ENCODE measurements at regions of chr3 and their contacts with region 1.

Region 1: DNA sequence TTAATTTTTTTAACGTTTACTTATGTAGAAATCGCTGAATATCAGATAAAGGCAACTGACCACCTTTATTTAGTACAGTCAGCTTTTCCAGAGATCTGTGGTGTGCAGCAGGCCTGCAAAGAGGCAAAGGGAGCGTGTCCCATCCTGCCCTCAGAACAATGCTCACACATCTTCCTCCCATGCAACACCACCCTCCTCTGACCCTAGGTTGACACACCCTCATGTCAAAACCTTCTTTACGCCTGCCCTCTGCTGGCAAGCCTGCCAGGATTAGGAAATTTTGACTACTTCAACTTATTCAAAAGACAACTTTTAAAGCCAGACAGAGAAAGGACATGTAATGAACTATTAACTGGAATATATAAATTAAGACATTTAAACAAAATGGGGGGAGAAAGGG is 513.7 kb downstream of the FOXP1 start:
- DNase-seq: peak; percentile 96
- H3K4me3 ChIP-seq: peak overlapping the region in 1 of 4 donors; percentile 31
- H3K27ac ChIP-seq: peak overlapping the region; percentile 92 to 98 (median 98)
- H3K4me1 ChIP-seq: peaks cover 62 to 93% (median 91%) of the 10 kb centered on the region in 4 donors
- H3K27me3 ChIP-seq: no peaks in the 10 kb centered on the region
- CTCF ChIP-seq: peak; percentile 48 to 59 (median 53)
- EP300 ChIP-seq: no peak
- POLR2A ChIP-seq: no peak

Region 2: DNA sequence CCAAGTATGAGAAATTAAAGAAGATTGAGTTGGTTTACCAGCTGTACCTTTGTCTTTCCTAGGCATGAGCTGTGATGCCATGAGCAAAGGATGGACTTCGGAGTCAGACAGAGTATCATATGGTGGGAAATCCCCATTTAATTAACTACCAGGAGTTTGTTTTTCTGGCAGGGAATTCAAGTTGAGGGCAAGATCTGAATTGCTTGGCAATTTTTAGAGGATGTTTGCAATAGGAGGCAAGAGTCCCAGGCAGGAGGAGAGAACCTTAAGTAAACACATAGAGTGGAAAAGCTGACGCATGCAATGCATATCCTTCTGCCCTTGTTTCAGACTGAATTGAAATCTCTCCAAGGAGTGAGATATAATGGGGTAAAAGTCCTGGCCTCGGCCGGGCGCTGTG is 187.7 kb before region 1 on chr3:
- intact Hi-C with region 1: no loop called
- DNase-seq: no peak
- H3K4me3 ChIP-seq: no peak overlapping the region
- H3K27ac ChIP-seq: no peak overlapping the region
- H3K4me1 ChIP-seq: no peaks in the 10 kb centered on the region
- H3K27me3 ChIP-seq: no peaks in the 10 kb centered on the region
- CTCF ChIP-seq: no peak
- EP300 ChIP-seq: no peak
- POLR2A ChIP-seq: no peak

Region 3: DNA sequence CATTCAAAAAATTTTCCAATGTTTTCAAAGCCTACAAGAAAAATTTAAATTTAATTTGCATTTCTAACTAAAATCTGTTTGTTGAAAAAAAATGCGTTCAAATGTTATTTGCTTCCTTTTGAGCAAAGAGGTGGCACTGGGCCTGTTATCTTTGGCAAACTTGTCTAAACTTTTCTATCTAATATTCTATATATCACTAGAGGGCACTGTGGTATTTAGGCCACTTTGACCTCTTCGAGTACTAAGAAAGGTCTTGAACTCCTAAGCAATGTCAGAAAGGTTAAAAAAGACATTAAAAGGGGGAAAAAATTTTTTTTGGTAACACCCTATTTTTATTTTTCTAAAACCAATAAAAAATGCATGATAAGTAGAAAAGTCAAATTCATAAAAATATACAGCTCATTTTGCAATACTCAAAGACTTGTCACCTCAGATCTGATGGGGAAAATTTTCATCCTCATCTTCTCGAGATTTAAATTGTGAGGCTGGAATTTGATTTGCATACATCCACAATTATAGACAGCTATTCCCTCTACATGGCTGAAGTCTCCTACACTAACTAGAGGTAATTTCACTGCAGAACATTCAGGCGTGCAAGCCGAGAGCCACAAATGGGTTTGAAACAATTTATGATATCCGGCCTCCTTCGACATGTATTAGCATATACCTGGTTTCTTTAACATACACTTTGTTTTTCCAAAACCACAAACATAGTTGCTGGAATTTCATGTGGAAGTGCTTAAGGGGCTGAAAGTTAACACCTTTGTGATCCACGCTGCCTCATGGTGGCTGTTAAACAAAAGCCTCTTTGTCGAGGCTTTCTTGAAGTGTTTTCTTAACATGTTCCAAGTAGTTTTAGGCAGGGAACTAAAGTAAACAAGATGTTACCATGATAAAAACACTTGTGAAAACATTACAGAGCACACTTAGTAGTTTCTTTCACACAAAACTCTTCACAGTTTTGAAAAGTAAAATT is 62.7 kb before region 1 on chr3:
- intact Hi-C with region 1: loop called (anchors 5 kb)
- DNase-seq: no peak
- H3K4me3 ChIP-seq: no peak overlapping the region
- H3K27ac ChIP-seq: peak overlapping the region; percentile 63 to 78 (median 74)
- H3K4me1 ChIP-seq: peaks cover 48 to 99% (median 97%) of the 10 kb centered on the region in 4 donors
- H3K27me3 ChIP-seq: no peaks in the 10 kb centered on the region
- CTCF ChIP-seq: peak; percentile 31 to 49 (median 40)
- EP300 ChIP-seq: no peak
- POLR2A ChIP-seq: no peak

Region 4: GRCh38 chr3:71103430-71103921 is 33.7 kb after region 1 on chr3:
- intact Hi-C with region 1: loop called (anchors 5 kb)
- DNase-seq: no peak
- H3K4me3 ChIP-seq: no peak overlapping the region
- H3K27ac ChIP-seq: peak overlapping the region; percentile 79 to 84 (median 82)
- H3K4me1 ChIP-seq: peaks cover 52 to 100% (median 100%) of the 10 kb centered on the region in 4 donors
- H3K27me3 ChIP-seq: no peaks in the 10 kb centered on the region
- CTCF ChIP-seq: no peak
- EP300 ChIP-seq: no peak
- POLR2A ChIP-seq: no peak

Region 5: GRCh38 chr3:71176366-71176765 is 106.6 kb after region 1 on chr3:
- intact Hi-C with region 1: no loop called
- DNase-seq: no peak
- H3K4me3 ChIP-seq: no peak overlapping the region
- H3K27ac ChIP-seq: no peak overlapping the region
- H3K4me1 ChIP-seq: peaks cover 3 to 41% (median 14%) of the 10 kb centered on the region in 4 donors
- H3K27me3 ChIP-seq: no peaks in the 10 kb centered on the region
- CTCF ChIP-seq: no peak
- EP300 ChIP-seq: no peak
- POLR2A ChIP-seq: no peak